MCF 10A (cell line): ENCODE measurements at regions of chr1 and their contacts with region 1.

Region 1: GRCh38 chr1:26500488-26501175 is 28.4 kb downstream of the HMGN2 start:
- DNase-seq: peak; percentile 86
- H3K4me3 Mint-ChIP-seq: peak overlapping the region; percentile 86
- H3K27ac Mint-ChIP-seq: peak overlapping the region; percentile 91
- H3K4me1 Mint-ChIP-seq: no peaks in the 10 kb centered on the region
- H3K27me3 Mint-ChIP-seq: no peaks in the 10 kb centered on the region
- CTCF ChIP-seq: no peak

Region 2: GRCh38 chr1:26321315-26322041 is 179.2 kb before region 1 on chr1:
- CTCF ChIA-PET with region 1: no interaction called
- POLR2A ChIA-PET with region 1: no interaction called
- intact Hi-C with region 1: no loop called
- DNase-seq: peak; percentile 88
- H3K4me3 Mint-ChIP-seq: no peak overlapping the region
- H3K27ac Mint-ChIP-seq: peak overlapping the region; percentile 3
- H3K4me1 Mint-ChIP-seq: peaks cover 8% of the 10 kb centered on the region
- H3K27me3 Mint-ChIP-seq: no peaks in the 10 kb centered on the region
- CTCF ChIP-seq: peak; percentile 89

Region 3: GRCh38 chr1:26408604-26409003 is 92.0 kb before region 1 on chr1:
- CTCF ChIA-PET with region 1: no interaction called
- POLR2A ChIA-PET with region 1: no interaction called
- intact Hi-C with region 1: no loop called
- DNase-seq: peak; percentile 76
- H3K4me3 Mint-ChIP-seq: no peak overlapping the region
- H3K27ac Mint-ChIP-seq: no peak overlapping the region
- H3K4me1 Mint-ChIP-seq: peaks cover 8% of the 10 kb centered on the region
- H3K27me3 Mint-ChIP-seq: peaks cover 55% of the 10 kb centered on the region
- CTCF ChIP-seq: no peak

Region 4: GRCh38 chr1:26472901-26473845 is 27.5 kb before region 1 on chr1:
- CTCF ChIA-PET with region 1: no interaction called
- POLR2A ChIA-PET with region 1: interaction called, 39 read pairs
- intact Hi-C with region 1: no loop called
- DNase-seq: peak; percentile 91
- H3K4me3 Mint-ChIP-seq: peak overlapping the region; percentile 85
- H3K27ac Mint-ChIP-seq: peak overlapping the region; percentile 49
- H3K4me1 Mint-ChIP-seq: peaks cover 29% of the 10 kb centered on the region
- H3K27me3 Mint-ChIP-seq: no peaks in the 10 kb centered on the region
- CTCF ChIP-seq: no peak

Region 5: DNA sequence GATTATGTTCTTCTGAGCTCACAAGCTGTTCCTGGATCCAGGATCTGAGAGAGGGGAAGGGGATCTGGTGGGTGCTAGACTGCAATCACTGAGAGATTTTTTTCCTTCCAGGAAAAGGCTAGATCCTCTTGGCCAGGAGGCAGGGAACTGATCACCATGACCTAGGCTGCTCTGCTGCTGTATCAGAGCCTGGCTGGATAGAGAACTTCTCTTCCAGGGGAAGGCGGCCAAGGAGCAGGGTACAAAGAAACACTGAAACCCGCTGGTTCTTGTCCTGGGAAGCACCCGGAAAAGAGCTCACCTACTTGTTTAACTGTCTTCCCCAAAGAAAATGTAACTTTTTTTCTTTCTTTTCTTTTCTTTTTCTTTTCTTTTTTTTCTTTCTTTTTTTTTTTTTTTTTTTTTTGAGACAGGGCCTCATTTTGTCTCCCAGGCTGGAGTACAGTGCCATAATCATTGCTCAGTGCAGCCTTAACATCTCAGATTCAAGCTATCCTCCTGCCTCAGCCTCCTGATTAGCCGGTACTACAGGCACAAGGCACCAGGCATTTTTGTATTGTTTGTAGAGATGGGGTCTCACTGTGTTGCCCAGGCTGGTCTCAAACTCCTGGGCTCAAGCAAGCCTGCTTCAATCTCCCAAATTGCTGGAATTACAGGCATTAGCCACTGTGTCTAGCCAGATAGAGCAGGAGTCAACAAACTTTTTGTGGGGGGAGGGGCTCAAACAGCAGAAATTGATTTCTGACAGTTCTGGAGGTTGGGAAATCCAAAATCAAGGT is 16.5 kb after region 1 on chr1:
- CTCF ChIA-PET with region 1: interaction called, 3 read pairs
- POLR2A ChIA-PET with region 1: interaction called, 56 read pairs
- intact Hi-C with region 1: no loop called
- DNase-seq: no peak
- H3K4me3 Mint-ChIP-seq: no peak overlapping the region
- H3K27ac Mint-ChIP-seq: no peak overlapping the region
- H3K4me1 Mint-ChIP-seq: peaks cover 8% of the 10 kb centered on the region
- H3K27me3 Mint-ChIP-seq: no peaks in the 10 kb centered on the region
- CTCF ChIP-seq: no peak

Region 6: DNA sequence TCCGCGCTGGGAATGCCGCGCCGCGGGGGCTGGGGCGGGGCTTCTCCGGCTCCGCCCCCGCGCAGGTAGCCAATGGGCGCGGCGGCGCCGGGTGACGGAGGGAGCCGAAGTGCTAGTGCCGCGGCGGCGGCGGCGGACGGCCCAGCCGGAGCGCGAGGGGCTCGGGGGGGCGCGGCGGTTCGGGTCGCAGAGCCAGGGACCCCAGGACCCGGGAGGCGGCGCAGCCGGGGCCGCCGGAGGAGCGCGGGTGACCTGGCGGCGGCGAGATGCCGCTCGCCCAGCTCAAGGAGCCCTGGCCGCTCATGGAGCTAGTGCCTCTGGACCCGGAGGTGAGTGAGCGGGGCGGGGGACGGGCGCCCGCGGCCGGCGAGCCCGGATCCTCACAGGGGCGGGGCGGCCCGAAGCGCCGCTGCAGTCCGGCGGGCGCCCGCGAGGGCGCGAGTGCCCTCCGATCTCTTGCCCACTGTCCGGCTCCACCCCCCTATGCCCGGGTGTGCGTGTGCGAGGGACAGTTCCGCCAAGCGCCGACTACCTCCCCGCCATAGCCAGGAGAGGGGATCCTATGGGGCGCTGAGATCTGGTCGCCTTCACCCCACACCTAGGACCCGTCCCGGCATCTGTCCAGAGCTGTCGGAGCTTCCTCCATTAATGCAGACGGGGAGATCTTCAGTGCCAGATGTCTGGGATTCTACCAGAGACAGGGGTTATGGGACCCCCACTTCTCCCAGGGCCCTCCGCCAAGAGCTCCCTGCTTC is 29.2 kb after region 1 on chr1 and contains the start of gene RPS6KA1:
- CTCF ChIA-PET with region 1: interaction called, 75 read pairs
- POLR2A ChIA-PET with region 1: interaction called, 282 read pairs
- intact Hi-C with region 1: loop called (anchors 1 kb)
- DNase-seq: peak; percentile 56
- H3K4me3 Mint-ChIP-seq: peak within 1 kb of the TSS; percentile 89
- H3K27ac Mint-ChIP-seq: peak within 1 kb of the TSS; percentile 90
- H3K4me1 Mint-ChIP-seq: peaks cover 14% of the 10 kb centered on the region
- H3K27me3 Mint-ChIP-seq: no peaks in the 10 kb centered on the region
- CTCF ChIP-seq: no peak
- total RNA-seq, gene RPS6KA1: 43.9 and 50.9 TPM in 2 replicates